Activated CD4-positive, alpha-beta T cell treated with anti-CD3 and anti-CD28 coated beads for 36 hours (primary cell): ENCODE measurements at regions of chr6 and their contacts with region 1.

Region 1: DNA sequence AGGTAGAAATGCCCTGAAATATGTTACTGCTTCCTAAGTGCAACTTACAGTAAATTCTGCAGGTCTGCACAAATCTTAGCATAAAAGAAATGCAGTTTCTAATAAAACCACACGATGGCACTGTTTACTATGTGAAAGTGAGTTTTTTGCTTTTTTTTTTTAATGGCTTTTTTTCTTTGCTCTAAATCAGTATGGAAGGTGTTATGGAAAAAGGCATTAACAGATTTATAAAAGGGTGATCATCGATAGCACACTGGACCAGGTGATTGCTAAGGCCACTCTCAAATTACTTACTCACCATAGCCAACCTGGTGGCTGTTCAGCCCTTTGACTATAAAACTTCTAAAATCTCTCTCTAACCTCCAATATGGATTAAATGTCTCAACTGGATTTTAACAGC is 45.8 kb downstream of the AHI1 start:
- DNase-seq: no peak
- ATAC-seq: no peak
- H3K4me3 Mint-ChIP-seq: no peak overlapping the region
- H3K27ac Mint-ChIP-seq: no peak overlapping the region
- H3K4me1 Mint-ChIP-seq: no peaks in the 10 kb centered on the region
- H3K27me3 Mint-ChIP-seq: no peaks in the 10 kb centered on the region

Region 2: DNA sequence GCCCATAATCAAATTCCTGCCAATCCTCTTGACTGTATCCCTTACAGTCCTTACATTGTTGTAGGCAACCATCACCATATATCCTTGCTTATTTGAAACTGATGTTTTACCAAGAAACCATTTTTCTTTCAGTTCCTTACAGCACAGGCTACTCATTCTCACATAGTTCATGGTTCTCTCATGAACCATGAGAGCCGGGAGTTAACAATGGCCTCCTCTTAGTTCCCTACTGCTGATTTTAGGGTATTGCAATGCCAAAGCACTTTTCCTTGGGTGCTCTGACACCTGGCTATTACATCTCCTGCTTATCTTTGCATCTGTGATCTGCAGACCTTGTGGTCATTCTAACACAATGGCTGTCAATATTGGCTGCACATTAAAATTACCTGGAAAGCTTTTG is 137.2 kb before region 1 on chr6:
- CTCF ChIA-PET with region 1: no interaction called
- POLR2A ChIA-PET with region 1: no interaction called
- intact Hi-C with region 1: no loop called
- DNase-seq: no peak
- ATAC-seq: no peak
- H3K4me3 Mint-ChIP-seq: no peak overlapping the region
- H3K27ac Mint-ChIP-seq: no peak overlapping the region
- H3K4me1 Mint-ChIP-seq: peaks cover 4% of the 10 kb centered on the region
- H3K27me3 Mint-ChIP-seq: no peaks in the 10 kb centered on the region

Region 3: GRCh38 chr6:135382182-135382628 is 69.5 kb before region 1 on chr6:
- CTCF ChIA-PET with region 1: no interaction called
- POLR2A ChIA-PET with region 1: no interaction called
- intact Hi-C with region 1: no loop called
- DNase-seq: no peak
- ATAC-seq: peak; percentile 63
- H3K4me3 Mint-ChIP-seq: no peak overlapping the region
- H3K27ac Mint-ChIP-seq: no peak overlapping the region
- H3K4me1 Mint-ChIP-seq: no peaks in the 10 kb centered on the region
- H3K27me3 Mint-ChIP-seq: no peaks in the 10 kb centered on the region

Region 4: DNA sequence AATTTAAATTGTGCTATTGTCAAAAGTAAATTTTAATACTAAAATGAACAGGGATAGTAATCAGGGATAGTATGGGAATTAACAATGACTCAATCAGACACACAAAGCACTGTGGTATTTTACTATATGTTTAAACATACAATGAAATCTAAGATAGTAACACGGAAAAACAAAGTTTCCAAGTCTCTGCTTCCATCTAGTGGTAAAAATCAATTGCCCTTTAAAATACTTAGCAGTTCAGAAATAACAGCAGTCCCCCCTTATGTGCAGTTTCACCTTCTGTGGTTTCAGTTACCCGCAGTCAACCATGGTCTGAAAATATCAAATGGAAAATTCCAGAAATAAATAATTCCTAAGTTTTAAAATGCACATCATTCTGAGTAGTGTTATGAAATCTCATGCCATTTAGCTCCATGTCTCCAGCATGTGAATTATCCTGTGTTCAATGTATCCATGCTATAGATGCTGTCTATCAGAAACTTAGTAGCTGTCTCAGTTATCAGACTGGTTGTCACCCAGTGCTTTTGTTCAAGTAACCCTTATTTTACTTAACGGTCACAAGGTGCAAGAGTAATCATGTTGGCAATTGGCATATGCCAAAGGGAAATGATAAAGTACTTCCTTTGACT is 12.7 kb before region 1 on chr6:
- CTCF ChIA-PET with region 1: interaction called, 10 read pairs
- POLR2A ChIA-PET with region 1: no interaction called
- intact Hi-C with region 1: no loop called
- DNase-seq: no peak
- ATAC-seq: peak; percentile 46
- H3K4me3 Mint-ChIP-seq: no peak overlapping the region
- H3K27ac Mint-ChIP-seq: peak overlapping the region; percentile 66
- H3K4me1 Mint-ChIP-seq: peaks cover 20% of the 10 kb centered on the region
- H3K27me3 Mint-ChIP-seq: no peaks in the 10 kb centered on the region

Region 5: GRCh38 chr6:135497412-135498269 is 45.9 kb after region 1 on chr6 and contains the start of gene AHI1:
- CTCF ChIA-PET with region 1: interaction called, 3 read pairs
- POLR2A ChIA-PET with region 1: no interaction called
- intact Hi-C with region 1: loop called (anchors 2 to 5 kb)
- DNase-seq: peak; percentile 94
- ATAC-seq: peak; percentile 81
- H3K4me3 Mint-ChIP-seq: no peak within 1 kb of the TSS
- H3K27ac Mint-ChIP-seq: peak within 1 kb of the TSS; percentile 94
- H3K4me1 Mint-ChIP-seq: peaks cover 7% of the 10 kb centered on the region
- H3K27me3 Mint-ChIP-seq: no peaks in the 10 kb centered on the region
- total RNA-seq, gene AHI1: 35.6 to 36.0 TPM

Region 6: DNA sequence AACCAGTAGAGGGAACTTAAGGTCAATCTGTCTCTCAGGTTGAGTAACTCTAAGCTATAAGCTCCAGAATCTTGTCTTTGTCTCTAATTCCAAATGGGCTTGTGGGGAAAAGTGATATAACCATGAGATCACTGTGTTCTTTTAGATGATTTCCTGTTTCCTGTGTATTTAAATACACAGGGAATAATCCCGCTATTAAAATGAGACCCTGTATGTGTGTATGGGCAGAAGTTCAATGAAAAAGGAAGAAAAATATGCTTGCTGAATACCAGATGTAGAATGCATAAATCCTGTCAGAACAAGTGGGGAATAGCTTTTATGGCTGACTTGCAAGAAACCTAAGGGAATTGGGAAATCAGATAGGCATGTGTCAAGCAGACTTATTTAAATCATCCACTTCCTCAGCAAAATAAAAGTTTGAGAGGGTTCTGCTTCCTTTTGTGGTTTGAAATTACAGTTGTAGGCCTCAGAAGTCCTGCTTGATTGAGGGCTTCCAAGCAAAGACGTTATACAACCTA is 235.2 kb after region 1 on chr6:
- CTCF ChIA-PET with region 1: no interaction called
- POLR2A ChIA-PET with region 1: no interaction called
- intact Hi-C with region 1: no loop called
- DNase-seq: no peak
- ATAC-seq: no peak
- H3K4me3 Mint-ChIP-seq: no peak overlapping the region
- H3K27ac Mint-ChIP-seq: no peak overlapping the region
- H3K4me1 Mint-ChIP-seq: peaks cover 21% of the 10 kb centered on the region
- H3K27me3 Mint-ChIP-seq: no peaks in the 10 kb centered on the region

Region 7: GRCh38 chr6:135728589-135728988 is 276.9 kb after region 1 on chr6:
- CTCF ChIA-PET with region 1: no interaction called
- POLR2A ChIA-PET with region 1: no interaction called
- intact Hi-C with region 1: no loop called
- DNase-seq: no peak
- ATAC-seq: no peak
- H3K4me3 Mint-ChIP-seq: no peak overlapping the region
- H3K27ac Mint-ChIP-seq: no peak overlapping the region
- H3K4me1 Mint-ChIP-seq: no peaks in the 10 kb centered on the region
- H3K27me3 Mint-ChIP-seq: no peaks in the 10 kb centered on the region

Region 8: DNA sequence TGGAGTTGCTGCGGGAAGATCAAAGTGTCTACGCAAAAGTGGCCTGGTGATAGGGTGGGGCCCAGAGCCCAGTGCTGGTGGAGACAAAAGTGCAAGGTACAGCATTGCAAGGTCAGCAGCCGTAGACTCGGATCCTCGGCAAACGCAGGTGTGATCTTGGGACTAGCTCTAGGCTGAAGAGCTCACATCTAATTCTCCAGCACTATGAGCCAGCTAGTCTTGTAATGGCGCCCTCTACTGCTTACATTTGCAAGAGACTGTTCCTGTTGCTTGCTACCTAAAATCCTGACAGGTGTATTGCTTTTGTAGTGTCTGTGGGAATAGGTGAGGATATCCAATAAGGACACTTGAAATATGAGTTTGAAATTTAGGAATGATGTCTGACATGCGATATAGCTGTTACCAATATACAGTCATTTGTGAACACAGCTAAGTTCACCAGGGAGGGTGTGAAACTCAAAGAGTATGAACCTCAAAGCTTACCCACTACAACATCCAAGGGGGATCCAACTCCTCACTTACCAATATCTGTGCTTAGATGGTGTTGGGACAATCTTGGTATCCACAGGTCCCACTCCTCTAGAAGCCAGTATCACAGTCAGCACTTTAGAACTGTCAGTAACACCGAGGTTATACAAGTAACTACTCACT is 458.2 kb after region 1 on chr6:
- CTCF ChIA-PET with region 1: interaction called, 5 read pairs
- POLR2A ChIA-PET with region 1: no interaction called
- intact Hi-C with region 1: loop called in 1 of 2 experiments (anchors 5 kb)
- DNase-seq: peak; percentile 71
- ATAC-seq: peak; percentile 81
- H3K4me3 Mint-ChIP-seq: no peak overlapping the region
- H3K27ac Mint-ChIP-seq: no peak overlapping the region
- H3K4me1 Mint-ChIP-seq: peaks cover 11% of the 10 kb centered on the region
- H3K27me3 Mint-ChIP-seq: no peaks in the 10 kb centered on the region

Region 9: GRCh38 chr6:136317021-136317694 is 865.5 kb after region 1 on chr6:
- CTCF ChIA-PET with region 1: no interaction called
- POLR2A ChIA-PET with region 1: no interaction called
- intact Hi-C with region 1: loop called in 1 of 2 experiments (anchors 2 kb)
- DNase-seq: peak; percentile 75
- ATAC-seq: peak; percentile 88
- H3K4me3 Mint-ChIP-seq: no peak overlapping the region
- H3K27ac Mint-ChIP-seq: no peak overlapping the region
- H3K4me1 Mint-ChIP-seq: no peaks in the 10 kb centered on the region
- H3K27me3 Mint-ChIP-seq: no peaks in the 10 kb centered on the region